Caco-2 (cell line): ENCODE measurements at regions of chr17 and their contacts with region 1.

Region 1: GRCh38 chr17:74379495-74380085 is 12.3 kb downstream of the GPR142 start:
- DNase-seq: peak; percentile 92 to 95
- H3K4me3 ChIP-seq: no peak overlapping the region
- H3K4me3 Mint-ChIP-seq: no peak overlapping the region
- H3K27ac Mint-ChIP-seq: no peak overlapping the region
- H3K4me1 ChIP-seq: peaks cover 18% of the 10 kb centered on the region
- H3K4me1 Mint-ChIP-seq: peaks cover 16% of the 10 kb centered on the region
- H3K27me3 ChIP-seq: no peaks in the 10 kb centered on the region
- H3K27me3 Mint-ChIP-seq: no peaks in the 10 kb centered on the region
- CTCF ChIP-seq: peak; percentile 95 to 98

Region 2: DNA sequence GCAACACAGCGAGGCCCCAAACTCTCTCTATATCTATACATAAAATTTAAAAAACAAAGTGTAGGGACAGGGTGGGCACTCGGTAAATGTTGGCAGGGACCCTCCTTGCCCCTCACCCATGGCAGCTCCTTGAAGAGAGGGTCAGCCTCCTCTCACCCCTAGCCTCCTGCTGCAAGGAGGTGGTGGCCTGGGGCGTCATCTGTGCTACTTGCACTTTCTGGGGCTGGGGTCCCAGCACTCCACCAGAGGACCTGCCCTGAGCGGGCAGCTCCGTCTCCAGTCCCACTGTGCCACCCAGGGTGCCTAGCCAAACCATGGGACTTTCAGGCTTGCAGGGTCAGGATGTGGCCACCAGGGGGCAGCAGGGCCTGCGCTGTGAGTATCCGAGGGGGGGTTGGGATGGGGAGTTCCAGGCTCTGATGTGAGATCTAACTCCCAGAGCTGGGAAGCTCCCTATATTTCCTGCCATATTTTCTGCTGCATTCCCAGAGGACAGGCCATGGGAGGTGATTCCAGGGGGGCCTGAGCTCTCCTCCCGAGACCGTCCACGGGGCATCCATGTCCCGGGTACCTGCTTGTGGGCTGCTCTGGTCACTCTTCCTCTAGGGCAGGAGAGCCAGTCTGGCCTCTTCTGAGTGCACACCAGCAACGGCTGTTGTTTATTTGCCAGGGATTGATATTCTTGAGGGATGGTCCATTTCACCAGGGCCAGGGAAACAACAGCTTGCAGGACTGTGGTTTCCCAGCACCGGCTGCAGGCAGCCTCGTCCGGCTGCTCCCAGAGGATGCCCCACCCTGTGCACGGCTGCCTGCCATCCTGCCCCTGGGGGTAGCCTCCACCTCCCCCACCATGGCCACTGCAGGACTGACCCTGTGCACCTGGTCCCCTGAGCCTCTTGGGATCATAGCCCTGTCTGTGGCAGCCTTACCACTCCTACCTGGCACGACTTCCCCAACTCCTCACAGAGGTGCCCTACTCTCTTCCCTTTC is 11.2 kb before region 1 on chr17:
- CTCF ChIA-PET with region 1: interaction called, 28 read pairs
- POLR2A ChIA-PET with region 1: no interaction called
- intact Hi-C with region 1: no loop called
- DNase-seq: peak; percentile 72 to 75
- H3K4me3 ChIP-seq: no peak overlapping the region
- H3K4me3 Mint-ChIP-seq: no peak overlapping the region
- H3K27ac Mint-ChIP-seq: no peak overlapping the region
- H3K4me1 ChIP-seq: peaks cover 7% of the 10 kb centered on the region
- H3K4me1 Mint-ChIP-seq: peaks cover 5% of the 10 kb centered on the region
- H3K27me3 ChIP-seq: no peaks in the 10 kb centered on the region
- H3K27me3 Mint-ChIP-seq: no peaks in the 10 kb centered on the region
- CTCF ChIP-seq: peak; percentile 88 to 97

Region 3: DNA sequence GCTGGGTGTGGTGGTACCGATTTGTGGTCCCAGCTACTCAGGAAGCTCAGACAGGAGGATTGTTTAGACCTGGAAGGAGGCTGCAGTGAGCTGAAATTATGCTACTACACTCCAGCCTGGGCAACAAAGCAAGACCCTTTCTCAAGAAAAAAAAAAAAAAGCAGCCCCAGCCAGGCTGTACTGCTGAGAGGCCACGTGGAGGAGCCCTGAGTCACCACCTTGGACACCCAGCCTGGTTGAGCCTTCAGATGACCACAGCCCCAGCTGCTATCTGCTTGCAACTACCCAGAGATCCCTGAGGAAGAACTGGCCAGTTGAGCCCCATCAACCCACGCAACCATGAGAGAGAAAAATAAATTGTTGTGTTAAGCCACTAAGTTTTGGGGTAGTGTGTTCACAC is 28.7 kb after region 1 on chr17:
- CTCF ChIA-PET with region 1: interaction called, 12 read pairs
- POLR2A ChIA-PET with region 1: no interaction called
- intact Hi-C with region 1: no loop called
- DNase-seq: peak; percentile 73 to 80
- H3K4me3 ChIP-seq: no peak overlapping the region
- H3K4me3 Mint-ChIP-seq: no peak overlapping the region
- H3K27ac Mint-ChIP-seq: no peak overlapping the region
- H3K4me1 ChIP-seq: peaks cover 5% of the 10 kb centered on the region; the same call in 1 of the 2 replicates
- H3K4me1 Mint-ChIP-seq: peaks cover 6% of the 10 kb centered on the region
- H3K27me3 ChIP-seq: no peaks in the 10 kb centered on the region
- H3K27me3 Mint-ChIP-seq: no peaks in the 10 kb centered on the region
- CTCF ChIP-seq: peak in 1 of 2 experiments; percentile 64

Region 4: DNA sequence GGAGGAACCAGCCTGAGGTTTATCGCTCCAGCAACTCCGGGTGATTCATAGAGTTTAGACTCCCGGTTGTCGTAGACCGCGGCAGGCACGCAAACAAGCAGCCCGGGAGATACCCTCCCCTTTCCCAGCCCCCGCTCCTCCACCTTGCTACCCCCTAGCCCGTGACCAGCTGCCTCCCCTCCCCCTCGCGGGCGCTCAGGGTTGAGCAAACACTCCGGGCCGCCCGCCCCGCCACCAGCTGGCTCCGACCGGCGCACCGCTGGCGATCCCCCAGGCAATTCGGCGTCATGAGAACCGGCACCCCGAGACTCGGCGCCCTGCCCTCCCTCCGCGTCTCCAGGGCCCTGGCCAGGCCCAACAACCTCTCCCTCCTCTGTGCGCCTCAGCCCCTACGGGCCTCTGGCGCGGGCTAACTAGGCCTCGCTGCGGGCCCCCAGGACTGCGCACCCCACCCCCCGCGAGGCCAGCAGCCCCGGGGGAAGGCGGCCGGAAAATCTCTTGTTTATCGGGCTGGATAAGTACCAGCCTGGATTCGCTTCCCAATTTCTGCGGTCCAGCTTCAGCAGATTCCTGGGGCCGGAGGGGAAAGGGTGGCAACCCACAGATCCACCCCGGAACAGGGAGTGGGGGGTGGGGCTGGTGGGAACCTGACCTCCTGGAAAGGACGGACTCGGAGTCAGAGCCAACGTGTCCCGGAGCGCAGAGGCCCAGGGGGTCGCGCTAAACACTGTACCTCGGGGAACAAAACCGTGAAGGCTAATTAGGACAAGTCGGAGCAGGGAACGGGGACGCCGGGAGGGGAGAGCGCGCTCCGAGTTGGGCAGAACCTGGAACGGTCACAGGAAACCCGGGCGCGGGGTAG is 51.3 kb after region 1 on chr17:
- CTCF ChIA-PET with region 1: interaction called, 7 read pairs
- POLR2A ChIA-PET with region 1: no interaction called
- intact Hi-C with region 1: loop called (anchors 2 kb)
- DNase-seq: peak; percentile 87 to 88
- H3K4me3 ChIP-seq: peak overlapping the region; percentile 50
- H3K4me3 Mint-ChIP-seq: peak overlapping the region; percentile 99
- H3K27ac Mint-ChIP-seq: peak overlapping the region; percentile 97
- H3K4me1 ChIP-seq: peaks cover 43% of the 10 kb centered on the region
- H3K4me1 Mint-ChIP-seq: peaks cover 27% of the 10 kb centered on the region
- H3K27me3 ChIP-seq: no peaks in the 10 kb centered on the region
- H3K27me3 Mint-ChIP-seq: no peaks in the 10 kb centered on the region
- CTCF ChIP-seq: no peak

Region 5: DNA sequence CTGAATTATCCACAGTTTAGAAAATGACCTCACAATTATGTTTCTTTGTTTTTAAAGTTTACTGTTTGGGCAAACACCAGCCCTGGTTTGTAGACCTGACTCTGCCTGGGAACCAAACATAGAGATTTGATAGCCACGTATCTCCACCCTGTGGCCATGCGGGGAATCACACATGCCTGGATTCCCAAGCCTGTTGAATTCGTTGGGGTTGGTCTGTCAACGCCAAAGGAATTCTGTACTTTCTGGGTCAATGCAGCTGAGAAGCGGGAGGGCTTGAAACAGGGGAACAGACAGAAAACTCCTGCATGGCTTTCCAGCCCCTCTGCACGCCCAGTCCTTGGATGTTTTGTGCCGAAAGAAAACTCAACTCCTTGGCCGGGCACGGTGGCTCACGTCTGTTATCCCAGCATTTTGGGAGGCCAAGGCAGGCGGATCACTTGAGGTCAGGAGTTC is 113.8 kb after region 1 on chr17:
- CTCF ChIA-PET with region 1: interaction called, 6 read pairs
- POLR2A ChIA-PET with region 1: no interaction called
- intact Hi-C with region 1: loop called (anchors 1 kb)
- DNase-seq: peak; percentile 72 to 84
- H3K4me3 ChIP-seq: no peak overlapping the region
- H3K4me3 Mint-ChIP-seq: no peak overlapping the region
- H3K27ac Mint-ChIP-seq: no peak overlapping the region
- H3K4me1 ChIP-seq: no peaks in the 10 kb centered on the region
- H3K4me1 Mint-ChIP-seq: no peaks in the 10 kb centered on the region
- H3K27me3 ChIP-seq: no peaks in the 10 kb centered on the region
- H3K27me3 Mint-ChIP-seq: peaks cover 10% of the 10 kb centered on the region
- CTCF ChIP-seq: peak; percentile 89 to 93

Region 6: GRCh38 chr17:74528491-74529199 is 149.1 kb after region 1 on chr17:
- CTCF ChIA-PET with region 1: interaction called, 4 read pairs
- POLR2A ChIA-PET with region 1: no interaction called
- intact Hi-C with region 1: loop called (anchors 1 kb)
- DNase-seq: no peak
- H3K4me3 ChIP-seq: no peak overlapping the region
- H3K4me3 Mint-ChIP-seq: no peak overlapping the region
- H3K27ac Mint-ChIP-seq: no peak overlapping the region
- H3K4me1 ChIP-seq: no peaks in the 10 kb centered on the region
- H3K4me1 Mint-ChIP-seq: no peaks in the 10 kb centered on the region
- H3K27me3 ChIP-seq: 0 out of 2 replicates have a peak, but pooled peaks cover 1% of the 10 kb centered on the region
- H3K27me3 Mint-ChIP-seq: peaks cover 32% of the 10 kb centered on the region
- CTCF ChIP-seq: no peak

Region 7: GRCh38 chr17:74601944-74602572 is 222.5 kb after region 1 on chr17:
- CTCF ChIA-PET with region 1: no interaction called
- POLR2A ChIA-PET with region 1: no interaction called
- intact Hi-C with region 1: loop called (anchors 5 kb)
- DNase-seq: peak; percentile 55 to 59
- H3K4me3 ChIP-seq: no peak overlapping the region
- H3K4me3 Mint-ChIP-seq: no peak overlapping the region
- H3K27ac Mint-ChIP-seq: no peak overlapping the region
- H3K4me1 ChIP-seq: no peaks in the 10 kb centered on the region
- H3K4me1 Mint-ChIP-seq: no peaks in the 10 kb centered on the region
- H3K27me3 ChIP-seq: peaks cover 1% of the 10 kb centered on the region
- H3K27me3 Mint-ChIP-seq: peaks cover 44% of the 10 kb centered on the region
- CTCF ChIP-seq: peak; percentile 81

Region 8: DNA sequence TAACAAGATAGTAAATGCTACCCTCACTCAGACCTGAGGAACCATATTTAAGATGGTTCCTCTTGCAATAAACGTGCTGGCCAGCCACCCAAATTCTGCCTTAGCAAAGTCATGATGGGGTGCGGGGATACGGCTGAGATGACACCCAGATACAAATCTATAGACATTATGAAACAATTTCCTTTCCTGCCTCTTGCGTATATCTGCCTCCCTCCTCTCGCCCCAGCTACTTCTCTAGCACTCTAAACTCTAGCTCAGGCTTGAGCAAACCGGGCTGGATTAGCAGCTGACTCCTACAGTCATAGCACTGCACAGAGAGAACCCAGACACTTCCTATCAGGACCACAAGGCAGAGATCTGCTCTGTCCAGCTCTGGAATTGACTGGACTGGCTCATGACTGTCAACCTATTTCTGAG is 310.8 kb after region 1 on chr17:
- CTCF ChIA-PET with region 1: no interaction called
- POLR2A ChIA-PET with region 1: no interaction called
- intact Hi-C with region 1: no loop called
- DNase-seq: no peak
- H3K4me3 ChIP-seq: no peak overlapping the region
- H3K4me3 Mint-ChIP-seq: no peak overlapping the region
- H3K27ac Mint-ChIP-seq: no peak overlapping the region
- H3K4me1 ChIP-seq: no peaks in the 10 kb centered on the region
- H3K4me1 Mint-ChIP-seq: no peaks in the 10 kb centered on the region
- H3K27me3 ChIP-seq: peaks cover 2% of the 10 kb centered on the region
- H3K27me3 Mint-ChIP-seq: no peaks in the 10 kb centered on the region
- CTCF ChIP-seq: no peak